ENCODE measurements at regions of chr3 and their contacts with region 1.

Region 1: GRCh38 chr3:142148792-142149672 is at the start of gene TFDP2:
- DNase-seq: peak; percentile 81 to 84 (median 84)
- H3K4me3 ChIP-seq: peak within 1 kb of the TSS; percentile 4 to 67
- H3K4me3 Mint-ChIP-seq: peak within 1 kb of the TSS; percentile 88 to 96 (median 90)
- H3K27ac ChIP-seq: peak within 1 kb of the TSS; percentile 66
- H3K27ac Mint-ChIP-seq: peak within 1 kb of the TSS; percentile 58 to 95 (median 92)
- H3K4me1 ChIP-seq: peaks cover 20% of the 10 kb centered on the region
- H3K4me1 Mint-ChIP-seq: peaks cover 23 to 35% (median 27%) of the 10 kb centered on the region in 4 donors
- H3K27me3 ChIP-seq: no peaks in the 10 kb centered on the region
- H3K27me3 Mint-ChIP-seq: no peaks in the 10 kb centered on the region
- total RNA-seq, gene TFDP2: 29.0 to 31.5 TPM

Region 2: DNA sequence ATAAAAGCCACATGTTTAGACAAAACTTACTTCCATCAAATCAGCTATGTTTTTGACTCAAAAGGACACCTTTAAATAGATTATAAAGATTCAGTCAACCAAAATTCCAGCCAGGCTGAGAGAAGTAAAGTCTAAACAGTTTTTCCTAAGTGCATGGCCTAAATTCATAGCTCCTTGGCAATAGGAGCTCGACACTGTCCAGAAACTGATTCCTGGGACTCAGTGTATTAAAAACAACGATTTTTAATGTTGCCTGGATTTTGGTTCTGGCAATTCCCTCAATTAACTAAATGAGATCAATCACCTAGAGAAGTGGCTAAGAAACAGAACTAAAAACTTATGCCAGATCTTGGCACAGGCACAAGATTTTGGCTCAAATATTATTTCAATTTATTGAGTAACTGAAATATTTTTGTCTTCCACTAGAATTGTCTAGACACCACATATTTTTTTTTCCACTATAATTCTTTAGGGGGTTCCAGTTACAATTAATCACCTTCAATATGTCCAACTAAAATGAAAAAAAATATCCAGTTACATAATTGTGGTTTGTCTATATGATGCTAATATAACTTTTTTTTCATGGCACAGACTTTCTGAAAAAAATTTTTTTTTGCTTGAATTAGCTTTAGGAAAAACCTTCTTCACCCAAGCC is 135.6 kb before region 1 on chr3:
- CTCF ChIA-PET with region 1: no interaction called
- POLR2A ChIA-PET with region 1: no interaction called
- intact Hi-C with region 1: no loop called
- DNase-seq: no peak
- H3K4me3 ChIP-seq: no peak overlapping the region
- H3K4me3 Mint-ChIP-seq: no peak overlapping the region
- H3K27ac ChIP-seq: no peak overlapping the region
- H3K27ac Mint-ChIP-seq: no peak overlapping the region
- H3K4me1 ChIP-seq: no peaks in the 10 kb centered on the region
- H3K4me1 Mint-ChIP-seq: peaks cover 0 to 3% (median under 1%) of the 10 kb centered on the region in 4 donors
- H3K27me3 ChIP-seq: no peaks in the 10 kb centered on the region
- H3K27me3 Mint-ChIP-seq: no peaks in the 10 kb centered on the region

Region 3: DNA sequence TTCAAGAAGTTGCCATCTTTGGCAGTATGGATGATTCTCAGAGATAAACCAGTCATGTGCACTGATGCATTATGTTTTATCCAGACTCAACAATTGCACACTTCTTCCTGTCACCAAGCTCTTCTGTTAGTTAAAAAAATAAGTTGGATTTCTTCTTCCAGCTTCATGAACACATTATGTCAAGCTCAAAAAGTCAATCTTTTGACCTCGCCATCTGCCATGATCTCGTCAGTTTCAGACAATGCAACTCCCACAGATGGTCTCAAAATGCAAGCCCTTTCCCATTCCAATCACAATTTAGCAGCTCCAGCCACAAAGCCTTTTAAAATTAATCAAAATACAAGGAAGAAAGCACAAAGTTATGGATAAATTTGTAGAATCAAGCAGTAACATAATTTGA is 42.5 kb before region 1 on chr3:
- CTCF ChIA-PET with region 1: no interaction called
- POLR2A ChIA-PET with region 1: no interaction called
- intact Hi-C with region 1: no loop called
- DNase-seq: no peak
- H3K4me3 ChIP-seq: no peak overlapping the region
- H3K4me3 Mint-ChIP-seq: no peak overlapping the region
- H3K27ac ChIP-seq: no peak overlapping the region
- H3K27ac Mint-ChIP-seq: no peak overlapping the region
- H3K4me1 ChIP-seq: no peaks in the 10 kb centered on the region
- H3K4me1 Mint-ChIP-seq: peaks cover 0 to 4% (median 0%) of the 10 kb centered on the region in 4 donors
- H3K27me3 ChIP-seq: no peaks in the 10 kb centered on the region
- H3K27me3 Mint-ChIP-seq: no peaks in the 10 kb centered on the region

Region 4: GRCh38 chr3:142211035-142211434 is 62.0 kb after region 1 on chr3:
- CTCF ChIA-PET with region 1: no interaction called
- POLR2A ChIA-PET with region 1: no interaction called
- intact Hi-C with region 1: no loop called
- DNase-seq: no peak
- H3K4me3 ChIP-seq: no peak overlapping the region
- H3K4me3 Mint-ChIP-seq: no peak overlapping the region
- H3K27ac ChIP-seq: no peak overlapping the region
- H3K27ac Mint-ChIP-seq: peak overlapping the region in 2 of 7 donors; percentile 18 to 39
- H3K4me1 ChIP-seq: no peaks in the 10 kb centered on the region
- H3K4me1 Mint-ChIP-seq: no peaks in the 10 kb centered on the region
- H3K27me3 ChIP-seq: no peaks in the 10 kb centered on the region
- H3K27me3 Mint-ChIP-seq: no peaks in the 10 kb centered on the region

Region 5: DNA sequence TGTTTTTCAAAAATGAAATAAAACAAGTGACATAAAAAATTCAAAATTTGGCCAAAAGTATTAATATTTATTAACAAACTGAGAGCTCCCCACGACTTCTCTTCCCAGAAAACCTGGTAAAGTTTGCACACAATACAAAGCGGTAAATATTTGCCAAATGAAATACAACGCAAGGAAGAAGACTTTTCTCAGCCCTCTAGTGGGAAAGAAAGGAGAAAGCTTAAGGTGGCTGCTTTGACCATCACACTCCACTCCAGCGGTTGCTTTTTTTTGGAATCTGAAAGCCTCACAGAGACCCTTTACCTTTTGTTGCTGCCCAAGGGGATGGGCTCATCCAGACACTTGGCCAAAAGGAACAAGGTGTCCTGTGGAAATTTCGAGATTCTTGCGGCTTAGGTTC is 77.5 kb after region 1 on chr3:
- CTCF ChIA-PET with region 1: no interaction called
- POLR2A ChIA-PET with region 1: no interaction called
- intact Hi-C with region 1: loop called (anchors 5 kb)
- DNase-seq: no peak
- H3K4me3 ChIP-seq: no peak overlapping the region
- H3K4me3 Mint-ChIP-seq: peak overlapping the region; percentile 34 to 93 (median 62)
- H3K27ac ChIP-seq: no peak overlapping the region
- H3K27ac Mint-ChIP-seq: peak overlapping the region in 1 of 7 donors; percentile 81
- H3K4me1 ChIP-seq: peaks cover 12% of the 10 kb centered on the region
- H3K4me1 Mint-ChIP-seq: peaks cover 8 to 18% (median 12%) of the 10 kb centered on the region in 4 donors
- H3K27me3 ChIP-seq: no peaks in the 10 kb centered on the region
- H3K27me3 Mint-ChIP-seq: no peaks in the 10 kb centered on the region

Measured in CD4-positive, alpha-beta memory T cell (primary cell).